A549 (cell line): ENCODE measurements at regions of chr20 and their contacts with region 1.

Region 1: GRCh38 chr20:63216041-63216848 is at the start of gene YTHDF1:
- DNase-seq: peak; percentile 95 to 96
- ATAC-seq: peak; percentile 82 to 88
- H3K4me3 ChIP-seq: peak within 1 kb of the TSS; percentile 95
- H3K27ac ChIP-seq: peak within 1 kb of the TSS; percentile 96 to 97
- H3K4me1 ChIP-seq: peaks cover 46% of the 10 kb centered on the region
- CTCF ChIP-seq: no peak
- EP300 ChIP-seq: no peak
- POLR2A ChIP-seq: peak; percentile 63
- RAD21 ChIP-seq: no peak
- polyA plus RNA-seq, gene YTHDF1: 31.4 and 31.8 TPM in 2 replicates

Region 2: GRCh38 chr20:63056236-63056948 is 159.9 kb before region 1 on chr20:
- CTCF ChIA-PET with region 1: interaction called, 20 read pairs
- POLR2A ChIA-PET with region 1: no interaction called
- DNase-seq: peak in 1 of 2 experiments; percentile 53
- ATAC-seq: peak; percentile 49 to 81
- H3K4me3 ChIP-seq: no peak overlapping the region
- H3K27ac ChIP-seq: no peak overlapping the region
- H3K4me1 ChIP-seq: 0 out of 3 replicates have a peak, but pooled peaks cover 3% of the 10 kb centered on the region
- CTCF ChIP-seq: peak; percentile 71
- EP300 ChIP-seq: no peak
- POLR2A ChIP-seq: no peak
- RAD21 ChIP-seq: peak; percentile 68 to 83

Region 3: DNA sequence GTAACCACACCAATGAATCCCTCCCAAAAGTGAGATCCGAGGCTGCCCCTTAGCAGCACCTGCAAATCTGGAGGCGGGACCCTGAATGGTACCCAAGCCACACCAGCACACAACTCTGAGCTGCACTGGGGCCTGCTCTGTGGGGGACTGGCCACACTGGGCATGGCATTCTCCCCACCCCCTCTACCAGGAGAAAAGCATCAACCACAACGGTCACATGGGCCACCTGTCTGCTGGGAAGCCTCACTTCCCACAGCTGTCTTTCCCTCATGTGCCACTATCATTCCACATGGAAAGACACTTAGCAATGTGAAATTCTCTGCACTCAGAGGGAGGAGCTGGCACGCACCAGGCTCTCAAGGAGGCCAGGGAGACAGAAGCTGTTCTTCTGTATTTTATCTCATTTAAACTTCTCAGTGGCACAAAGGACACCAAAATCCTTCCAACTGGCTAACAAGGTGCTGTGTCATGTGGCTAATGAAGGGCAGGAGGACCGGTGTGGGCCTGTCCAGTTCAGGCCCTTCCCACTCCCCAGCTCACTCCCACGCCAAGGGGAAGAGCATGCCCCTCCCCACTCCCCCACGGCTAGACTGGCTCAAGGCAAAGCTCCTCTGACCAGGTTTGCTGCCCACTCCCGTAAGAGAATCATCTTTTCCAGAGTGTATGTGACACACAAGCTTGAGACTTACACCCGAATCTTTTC is 19.3 kb before region 1 on chr20:
- CTCF ChIA-PET with region 1: interaction called, 35 read pairs
- POLR2A ChIA-PET with region 1: no interaction called
- DNase-seq: no peak
- ATAC-seq: peak; percentile 14 to 48; a peak in 3 of 6 replicates
- H3K4me3 ChIP-seq: no peak overlapping the region
- H3K27ac ChIP-seq: no peak overlapping the region
- H3K4me1 ChIP-seq: peaks cover 33% of the 10 kb centered on the region
- CTCF ChIP-seq: no peak
- EP300 ChIP-seq: no peak
- POLR2A ChIP-seq: no peak
- RAD21 ChIP-seq: no peak

Region 4: DNA sequence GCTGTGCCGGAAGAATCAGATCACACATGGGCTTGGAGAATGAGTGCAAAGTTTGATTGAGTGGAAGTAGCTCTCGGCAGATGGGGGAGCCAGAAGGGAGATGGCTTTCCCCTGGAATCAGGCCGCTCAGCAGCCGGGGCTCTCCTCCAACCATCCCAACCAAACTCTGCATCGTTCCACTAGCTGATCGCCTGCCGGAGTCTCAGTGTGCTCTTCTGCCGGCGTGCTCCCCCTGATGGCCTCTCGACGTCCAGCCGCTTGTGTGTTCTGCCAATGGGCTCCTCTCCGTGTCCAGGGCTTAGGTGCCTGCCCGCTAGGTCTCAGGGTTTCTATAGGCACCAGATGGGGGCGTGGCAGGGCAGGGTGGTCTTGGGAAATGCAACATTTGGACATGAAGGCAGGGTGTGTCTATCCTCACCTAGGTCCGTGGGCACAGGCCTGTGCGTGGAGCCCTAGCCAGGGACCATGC is 14.6 kb after region 1 on chr20:
- CTCF ChIA-PET with region 1: interaction called, 69 read pairs
- POLR2A ChIA-PET with region 1: interaction called, 6 read pairs
- DNase-seq: peak in 1 of 2 experiments; percentile 56
- ATAC-seq: no peak
- H3K4me3 ChIP-seq: no peak overlapping the region
- H3K27ac ChIP-seq: peak overlapping the region; percentile 96 to 99
- H3K4me1 ChIP-seq: peaks cover 90% of the 10 kb centered on the region
- CTCF ChIP-seq: no peak
- EP300 ChIP-seq: no peak
- POLR2A ChIP-seq: no peak
- RAD21 ChIP-seq: no peak

Region 5: GRCh38 chr20:63290677-63291472 is 74.6 kb after region 1 on chr20:
- CTCF ChIA-PET with region 1: interaction called, 11 read pairs
- POLR2A ChIA-PET with region 1: no interaction called
- DNase-seq: peak; percentile 51 to 75
- ATAC-seq: peak; percentile 35 to 75
- H3K4me3 ChIP-seq: no peak overlapping the region
- H3K27ac ChIP-seq: peak overlapping the region in 1 of 2 experiments; percentile 29; a peak in 2 of 6 replicates
- H3K4me1 ChIP-seq: peaks cover 23% of the 10 kb centered on the region; the same call in 2 of the 3 replicates
- CTCF ChIP-seq: peak; percentile 52
- EP300 ChIP-seq: no peak
- POLR2A ChIP-seq: no peak
- RAD21 ChIP-seq: peak; percentile 42 to 45; a peak in 3 of 5 replicates